ENCODE measurements at regions of chr5 and their contacts with region 1.

Region 1: DNA sequence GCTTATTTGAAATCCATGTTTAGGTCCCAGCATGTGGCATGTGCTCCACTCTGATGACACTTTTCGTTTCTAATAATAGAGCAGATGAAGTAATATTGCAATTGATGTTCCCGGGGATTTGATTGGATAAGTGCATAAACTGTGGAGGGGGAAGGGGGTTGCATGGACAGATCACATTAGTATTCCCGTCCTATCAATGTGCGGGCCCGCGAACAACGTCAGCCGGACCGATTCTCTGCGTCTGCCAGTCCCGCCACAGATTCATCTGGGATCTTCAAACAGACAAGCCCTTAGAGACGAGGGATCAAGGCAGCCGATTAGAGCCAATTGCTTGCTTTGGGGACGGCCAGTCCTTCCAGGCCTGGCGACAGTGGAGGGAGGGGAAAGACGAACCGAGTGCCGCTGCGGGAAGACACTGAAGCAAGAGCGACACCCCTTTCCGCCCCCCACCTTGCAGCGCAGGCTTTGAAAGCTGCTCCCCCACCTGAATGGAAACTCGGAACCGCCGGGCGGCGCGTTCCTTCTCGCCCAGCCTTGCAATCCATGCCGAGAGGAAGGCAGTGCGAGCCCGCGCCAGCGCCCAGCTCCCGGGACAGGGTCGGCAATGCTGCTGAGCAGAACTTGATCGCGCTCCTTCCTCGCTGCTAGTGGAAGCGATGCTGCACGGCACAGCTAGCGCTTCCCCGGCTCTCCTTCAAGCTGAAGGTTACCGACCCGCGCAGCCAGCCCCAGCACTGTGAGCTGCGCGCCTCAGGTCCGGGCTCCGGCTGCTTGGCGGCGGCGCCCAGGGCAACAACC is at the start of gene RGS7BP:
- DNase-seq: peak; percentile 66
- ATAC-seq: peak; percentile 92
- total RNA-seq, gene RGS7BP: 6.5 TPM

Region 2: DNA sequence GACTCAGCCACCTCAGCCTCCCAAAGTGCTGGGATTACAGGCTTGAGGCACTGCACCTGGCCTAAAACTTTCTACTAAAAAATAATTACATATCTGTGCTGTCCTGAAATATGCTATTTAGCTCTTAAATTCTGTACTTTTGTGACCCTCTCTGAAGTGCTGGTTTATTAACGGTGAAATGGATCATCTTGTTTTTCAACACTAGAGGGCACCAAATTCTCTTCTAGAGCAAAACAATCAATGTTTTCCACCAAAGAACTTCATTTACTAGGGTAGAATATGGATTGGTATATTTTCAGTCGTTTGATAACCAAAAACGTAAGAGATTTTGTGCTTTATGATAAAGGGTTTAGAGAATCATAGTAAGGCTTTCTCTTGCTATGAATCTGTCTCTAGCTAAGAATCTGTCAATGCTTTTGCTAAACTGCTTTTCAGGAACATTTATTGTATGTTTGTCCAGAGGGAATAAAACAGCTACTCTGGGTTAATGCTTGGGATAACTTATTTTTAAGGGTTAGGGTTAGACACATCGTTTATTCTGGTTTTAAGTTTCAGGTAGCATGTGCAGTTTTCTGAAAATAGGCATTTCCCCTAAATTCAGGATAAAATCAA is 276.7 kb before region 1 on chr5:
- intact Hi-C with region 1: loop called (anchors 5 kb)
- DNase-seq: no peak
- ATAC-seq: no peak

Region 3: GRCh38 chr5:64331597-64332277 is 174.2 kb before region 1 on chr5:
- intact Hi-C with region 1: loop called (anchors 5 kb)
- DNase-seq: peak; percentile 79
- ATAC-seq: peak; percentile 93

Region 4: GRCh38 chr5:64595031-64595855 is 89.3 kb after region 1 on chr5:
- intact Hi-C with region 1: loop called (anchors 10 kb)
- DNase-seq: no peak
- ATAC-seq: peak; percentile 58

Region 5: GRCh38 chr5:64612344-64612961 is 106.5 kb after region 1 on chr5:
- intact Hi-C with region 1: loop called (anchors 1 kb)
- DNase-seq: no peak
- ATAC-seq: peak; percentile 60